ENCODE measurements at regions of chr17 and their contacts with region 1.

Region 1: DNA sequence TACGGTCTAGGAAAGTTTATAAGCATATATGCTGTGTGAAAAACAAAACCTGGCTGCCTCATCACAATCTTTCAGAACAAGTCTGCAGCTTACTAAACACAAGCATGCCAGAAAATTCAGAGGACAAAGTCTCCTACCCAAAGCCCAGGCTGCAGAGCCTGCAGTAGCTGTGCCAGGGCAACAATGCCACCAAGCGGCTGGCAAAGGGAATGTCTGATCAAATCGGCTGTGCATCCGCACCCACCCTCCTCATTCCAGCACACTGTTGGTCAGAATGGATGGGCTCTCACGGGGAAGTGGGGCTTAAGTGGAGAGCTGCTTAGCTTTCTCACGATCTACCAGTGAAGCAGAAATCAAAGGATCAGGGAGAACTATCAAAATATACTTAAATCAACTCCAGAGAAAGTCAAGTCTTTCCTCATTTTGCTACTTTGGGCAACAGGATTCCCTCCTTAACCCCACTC is 73.5 kb downstream of the CYTH1 start:
- DNase-seq: peak; percentile 92 to 99
- ATAC-seq: peak; percentile 97 to 98
- H3K4me3 ChIP-seq: no peak overlapping the region
- H3K27ac ChIP-seq: peak overlapping the region; percentile 78 to 88
- H3K4me1 ChIP-seq: peaks cover 48% of the 10 kb centered on the region
- CTCF ChIP-seq: peak; percentile 99
- EP300 ChIP-seq: no peak; a peak in 1 of 5 replicates
- POLR2A ChIP-seq: no peak
- RAD21 ChIP-seq: peak; percentile 100

Region 2: GRCh38 chr17:78250891-78251794 is 457.4 kb before region 1 on chr17:
- CTCF ChIA-PET with region 1: interaction called, 15 read pairs
- POLR2A ChIA-PET with region 1: no interaction called
- DNase-seq: peak; percentile 90 to 98
- ATAC-seq: peak; percentile 81 to 90
- H3K4me3 ChIP-seq: no peak overlapping the region
- H3K27ac ChIP-seq: peak overlapping the region; percentile 52 to 73; a peak in 5 of 6 replicates
- H3K4me1 ChIP-seq: peaks cover 10% of the 10 kb centered on the region
- CTCF ChIP-seq: peak; percentile 100
- EP300 ChIP-seq: no peak
- POLR2A ChIP-seq: no peak
- RAD21 ChIP-seq: peak; percentile 98

Region 3: GRCh38 chr17:78497115-78497540 is 211.4 kb before region 1 on chr17:
- CTCF ChIA-PET with region 1: interaction called, 488 read pairs
- POLR2A ChIA-PET with region 1: interaction called, 15 read pairs
- DNase-seq: peak; percentile 94 to 97
- ATAC-seq: peak; percentile 87 to 95
- H3K4me3 ChIP-seq: no peak overlapping the region
- H3K27ac ChIP-seq: peak overlapping the region; percentile 86 to 91
- H3K4me1 ChIP-seq: peaks cover 32% of the 10 kb centered on the region
- CTCF ChIP-seq: peak; percentile 99
- EP300 ChIP-seq: peak in 1 of 2 experiments; percentile 17; a peak in 1 of 5 replicates
- POLR2A ChIP-seq: no peak
- RAD21 ChIP-seq: peak; percentile 100

Region 4: DNA sequence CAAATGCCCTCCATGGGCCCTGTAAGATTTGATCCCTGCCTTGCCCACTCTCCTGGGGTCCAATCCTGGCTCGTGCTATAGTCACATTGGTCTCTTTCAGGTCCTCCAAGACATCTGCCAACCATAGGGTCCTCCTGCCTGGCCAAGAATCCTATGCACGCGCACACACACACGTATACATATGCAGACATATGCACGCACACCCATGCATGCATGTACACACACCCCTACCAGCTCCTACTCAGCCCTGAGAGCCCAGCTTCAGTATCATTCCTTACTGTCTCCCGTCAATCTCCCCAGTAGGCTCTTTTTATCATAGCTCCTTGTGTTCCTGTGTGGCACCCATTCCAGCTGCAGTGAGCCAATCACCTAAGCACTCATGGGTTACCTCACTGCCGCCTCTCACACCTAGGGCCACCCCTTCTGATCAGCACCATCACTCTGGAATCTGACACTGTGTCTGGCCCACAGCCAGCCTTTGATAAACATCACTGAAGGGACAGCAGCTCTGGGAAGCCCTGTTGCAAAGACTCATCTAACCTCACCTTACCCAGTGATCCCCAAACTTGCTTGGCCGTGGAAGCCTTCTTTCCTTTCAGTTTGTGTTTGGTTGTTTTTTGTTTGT is 123.4 kb before region 1 on chr17:
- CTCF ChIA-PET with region 1: interaction called, 11 read pairs
- POLR2A ChIA-PET with region 1: no interaction called
- DNase-seq: no peak
- ATAC-seq: no peak
- H3K4me3 ChIP-seq: no peak overlapping the region
- H3K27ac ChIP-seq: peak overlapping the region; percentile 34 to 94; a peak in 4 of 6 replicates
- H3K4me1 ChIP-seq: peaks cover 23% of the 10 kb centered on the region
- CTCF ChIP-seq: no peak
- EP300 ChIP-seq: no peak
- POLR2A ChIP-seq: no peak
- RAD21 ChIP-seq: no peak

Region 5: GRCh38 chr17:78617511-78618061 is 91.0 kb before region 1 on chr17:
- CTCF ChIA-PET with region 1: interaction called, 13 read pairs
- POLR2A ChIA-PET with region 1: no interaction called
- DNase-seq: no peak
- ATAC-seq: no peak
- H3K4me3 ChIP-seq: no peak overlapping the region
- H3K27ac ChIP-seq: peak overlapping the region in 1 of 2 experiments; percentile 34; a peak in 1 of 6 replicates
- H3K4me1 ChIP-seq: no peaks in the 10 kb centered on the region
- CTCF ChIP-seq: no peak
- EP300 ChIP-seq: no peak
- POLR2A ChIP-seq: no peak
- RAD21 ChIP-seq: no peak

Region 6: GRCh38 chr17:78684026-78684425 is 24.5 kb before region 1 on chr17:
- CTCF ChIA-PET with region 1: interaction called, 69 read pairs
- POLR2A ChIA-PET with region 1: no interaction called
- DNase-seq: no peak
- ATAC-seq: no peak
- H3K4me3 ChIP-seq: no peak overlapping the region
- H3K27ac ChIP-seq: peak overlapping the region in 1 of 2 experiments; percentile 57; a peak in 2 of 6 replicates
- H3K4me1 ChIP-seq: peaks cover 27% of the 10 kb centered on the region
- CTCF ChIP-seq: no peak
- EP300 ChIP-seq: no peak
- POLR2A ChIP-seq: no peak
- RAD21 ChIP-seq: no peak